ENCODE measurements at regions of chr10 and their contacts with region 1.

Region 1: GRCh38 chr10:117382861-117383260 is 7.6 kb upstream of the PDZD8 start:
- DNase-seq: no peak
- H3K27ac ChIP-seq: no peak overlapping the region
- CTCF ChIP-seq: no peak

Region 2: GRCh38 chr10:117399341-117400073 is 16.6 kb after region 1 on chr10:
- CTCF ChIA-PET with region 1: interaction called, 10 read pairs
- POLR2A ChIA-PET with region 1: no interaction called
- DNase-seq: peak; percentile 36
- H3K27ac ChIP-seq: no peak overlapping the region
- CTCF ChIP-seq: no peak